ENCODE measurements at regions of chr4 and their contacts with region 1.

Region 1: GRCh38 chr4:173013232-173013930 is 155.2 kb upstream of the GALNT7 start:
- H3K4me3 Mint-ChIP-seq: no peak overlapping the region
- H3K27ac Mint-ChIP-seq: no peak overlapping the region
- H3K4me1 Mint-ChIP-seq: peaks cover 5% of the 10 kb centered on the region
- H3K27me3 Mint-ChIP-seq: no peaks in the 10 kb centered on the region

Region 2: GRCh38 chr4:172323288-172323687 is 690.1 kb before region 1 on chr4:
- intact Hi-C with region 1: no loop called
- H3K4me3 Mint-ChIP-seq: no peak overlapping the region
- H3K27ac Mint-ChIP-seq: no peak overlapping the region
- H3K4me1 Mint-ChIP-seq: no peaks in the 10 kb centered on the region
- H3K27me3 Mint-ChIP-seq: no peaks in the 10 kb centered on the region

Region 3: GRCh38 chr4:172750910-172751309 is 262.5 kb before region 1 on chr4:
- intact Hi-C with region 1: no loop called
- H3K4me3 Mint-ChIP-seq: no peak overlapping the region
- H3K27ac Mint-ChIP-seq: no peak overlapping the region
- H3K4me1 Mint-ChIP-seq: peaks cover 11% of the 10 kb centered on the region
- H3K27me3 Mint-ChIP-seq: no peaks in the 10 kb centered on the region

Region 4: DNA sequence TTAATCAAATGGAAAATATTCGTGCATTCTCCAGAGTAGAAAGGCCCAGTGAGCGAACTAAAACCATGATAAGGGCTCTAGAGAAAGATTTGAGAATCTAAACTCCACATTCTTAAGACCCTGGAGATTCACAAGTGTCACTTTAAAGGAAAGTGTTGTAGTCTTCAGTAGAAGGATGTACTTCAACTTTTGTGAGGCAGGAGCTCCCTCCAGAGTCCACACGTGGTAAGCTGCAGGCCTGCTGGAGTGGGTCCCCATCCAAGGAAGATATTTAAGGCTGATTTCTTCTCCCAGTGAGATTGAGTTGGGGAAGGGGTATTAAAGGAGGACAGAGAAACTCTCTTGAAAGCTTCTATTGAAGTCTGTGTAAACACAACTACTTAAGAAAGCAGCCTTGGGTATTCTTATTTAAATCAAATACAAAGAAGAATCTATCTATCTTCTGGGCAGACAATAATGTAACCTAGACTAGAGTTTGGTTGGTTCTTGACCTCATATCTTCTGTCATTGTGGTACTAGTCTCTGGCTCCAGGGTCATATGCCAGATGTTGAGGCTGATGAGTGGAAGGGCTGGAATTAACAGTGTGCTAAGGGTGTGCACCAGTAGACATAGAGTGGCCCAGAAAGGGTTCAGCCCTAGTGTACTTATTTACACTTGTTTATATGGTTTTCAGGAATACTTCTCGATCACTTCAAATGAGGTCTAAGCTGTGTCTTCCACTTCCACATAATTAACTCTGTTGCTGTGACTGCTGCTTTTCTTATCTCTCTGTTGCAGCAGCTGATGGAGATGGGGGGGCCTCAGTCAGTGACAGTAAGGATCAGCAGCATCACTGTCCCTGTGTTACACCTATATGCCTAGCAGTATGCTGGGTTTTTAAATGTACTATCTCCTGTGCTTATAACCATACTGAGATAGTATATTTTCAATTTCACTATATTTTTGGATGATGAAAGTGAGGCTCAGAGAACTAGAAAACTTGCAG is 244.6 kb after region 1 on chr4:
- intact Hi-C with region 1: loop called (anchors 2 kb)
- H3K4me3 Mint-ChIP-seq: no peak overlapping the region
- H3K27ac Mint-ChIP-seq: no peak overlapping the region
- H3K4me1 Mint-ChIP-seq: peaks cover 10% of the 10 kb centered on the region
- H3K27me3 Mint-ChIP-seq: no peaks in the 10 kb centered on the region

Region 5: DNA sequence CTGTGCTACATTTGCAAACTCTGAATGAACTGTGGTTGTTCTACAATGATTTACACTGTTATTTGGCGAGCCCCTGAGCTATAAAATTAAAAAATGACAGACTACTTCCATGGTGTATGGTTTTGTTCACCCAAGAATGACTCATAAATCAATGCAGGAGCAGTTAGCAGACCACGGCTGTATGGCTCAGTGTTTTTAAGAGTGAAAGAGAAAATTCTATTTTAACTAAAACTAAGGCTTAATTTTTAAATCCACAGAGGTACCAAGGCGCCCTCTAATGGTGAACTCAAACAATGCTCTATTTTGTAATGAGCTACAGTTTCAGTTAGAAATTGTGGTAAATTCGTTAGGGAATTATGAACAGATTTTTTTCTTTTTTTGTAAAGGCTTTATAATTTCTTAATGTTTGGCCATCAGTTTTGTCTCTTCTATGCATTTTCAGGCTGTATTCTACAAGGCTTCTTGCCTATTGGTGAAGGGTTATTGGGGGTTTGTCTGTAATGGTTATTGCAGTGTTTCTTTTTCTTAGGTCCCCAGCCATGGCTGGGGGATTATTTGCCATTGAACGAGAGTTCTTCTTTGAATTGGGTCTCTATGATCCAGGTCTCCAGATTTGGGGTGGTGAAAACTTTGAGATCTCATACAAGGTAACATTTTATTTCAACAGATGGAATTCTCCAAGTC is 288.3 kb after region 1 on chr4:
- intact Hi-C with region 1: loop called (anchors 1 kb)
- H3K4me3 Mint-ChIP-seq: no peak overlapping the region
- H3K27ac Mint-ChIP-seq: no peak overlapping the region
- H3K4me1 Mint-ChIP-seq: no peaks in the 10 kb centered on the region
- H3K27me3 Mint-ChIP-seq: no peaks in the 10 kb centered on the region